ENCODE measurements at regions of chr1 and their contacts with region 1.

Region 1: DNA sequence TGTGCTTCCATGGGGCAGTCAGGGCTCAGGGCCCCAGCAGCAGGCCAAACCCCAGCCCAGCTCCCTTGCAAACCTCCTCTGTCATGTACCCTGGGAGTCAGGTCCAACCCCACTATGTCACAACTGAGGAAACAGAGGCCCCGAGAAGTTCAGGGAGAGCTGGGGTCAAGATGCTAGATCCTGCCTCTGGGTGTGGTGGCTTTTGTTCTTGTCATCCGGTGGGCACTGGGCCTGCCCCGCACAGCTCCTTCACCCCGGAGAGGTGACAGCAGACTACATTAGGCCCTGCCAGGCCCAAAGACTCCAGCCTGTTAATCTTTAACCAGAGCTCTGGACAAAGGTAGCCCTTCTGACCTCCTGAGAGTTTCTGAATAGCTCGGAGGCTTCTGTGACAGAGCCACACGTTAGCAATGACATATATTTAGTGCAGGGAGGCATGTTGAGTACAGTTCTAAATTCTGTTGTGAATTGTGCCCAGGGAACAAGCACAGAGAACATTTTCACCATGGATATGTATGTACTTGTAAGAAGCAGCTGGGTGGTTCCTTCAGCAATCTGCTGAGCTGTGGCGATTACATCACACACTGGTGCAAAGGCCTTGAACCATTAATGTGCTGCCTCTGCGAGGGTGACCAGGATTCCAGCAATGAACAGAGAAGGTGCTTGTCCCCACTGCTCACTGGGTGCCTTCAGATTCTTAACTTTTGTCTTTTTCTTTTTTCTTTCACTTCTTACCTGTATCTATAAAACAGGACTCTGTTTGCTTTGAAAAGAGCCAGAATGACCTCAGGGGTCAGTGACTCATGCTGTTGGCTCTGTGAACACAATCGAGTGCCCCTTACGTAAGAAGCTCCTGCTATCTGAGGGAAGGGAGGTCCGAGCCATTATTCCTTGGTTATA is 102.8 kb downstream of the RHOU start:
- DNase-seq: peak; percentile 70 to 73
- H3K4me3 ChIP-seq: no peak overlapping the region
- H3K27ac ChIP-seq: peak overlapping the region; percentile 87 to 94 (median 93)
- H3K4me1 ChIP-seq: peaks cover 16 to 41% of the 10 kb centered on the region in 2 donors
- H3K27me3 ChIP-seq: no peaks in the 10 kb centered on the region
- CTCF ChIP-seq: no peak
- POLR2A ChIP-seq: no peak

Region 2: GRCh38 chr1:228989992-228990827 is 152.1 kb after region 1 on chr1:
- intact Hi-C with region 1: loop called (anchors 10 kb)
- DNase-seq: peak; percentile 90 to 92
- H3K4me3 ChIP-seq: no peak overlapping the region
- H3K27ac ChIP-seq: peak overlapping the region; percentile 89 to 97 (median 94)
- H3K4me1 ChIP-seq: peaks cover 44 to 60% of the 10 kb centered on the region in 2 donors
- H3K27me3 ChIP-seq: no peaks in the 10 kb centered on the region
- CTCF ChIP-seq: no peak
- POLR2A ChIP-seq: peak in 1 of 2 donors; percentile 16

Region 3: GRCh38 chr1:229199850-229200243 is 361.8 kb after region 1 on chr1:
- intact Hi-C with region 1: no loop called
- DNase-seq: no peak
- H3K4me3 ChIP-seq: no peak overlapping the region
- H3K27ac ChIP-seq: no peak overlapping the region
- H3K4me1 ChIP-seq: peaks cover 9 to 23% of the 10 kb centered on the region in 2 donors
- H3K27me3 ChIP-seq: no peaks in the 10 kb centered on the region
- CTCF ChIP-seq: no peak
- POLR2A ChIP-seq: no peak

Measured in thyroid gland (tissue), 4 donors.